ENCODE measurements at regions of chr22 and their contacts with region 1.

Region 1: DNA sequence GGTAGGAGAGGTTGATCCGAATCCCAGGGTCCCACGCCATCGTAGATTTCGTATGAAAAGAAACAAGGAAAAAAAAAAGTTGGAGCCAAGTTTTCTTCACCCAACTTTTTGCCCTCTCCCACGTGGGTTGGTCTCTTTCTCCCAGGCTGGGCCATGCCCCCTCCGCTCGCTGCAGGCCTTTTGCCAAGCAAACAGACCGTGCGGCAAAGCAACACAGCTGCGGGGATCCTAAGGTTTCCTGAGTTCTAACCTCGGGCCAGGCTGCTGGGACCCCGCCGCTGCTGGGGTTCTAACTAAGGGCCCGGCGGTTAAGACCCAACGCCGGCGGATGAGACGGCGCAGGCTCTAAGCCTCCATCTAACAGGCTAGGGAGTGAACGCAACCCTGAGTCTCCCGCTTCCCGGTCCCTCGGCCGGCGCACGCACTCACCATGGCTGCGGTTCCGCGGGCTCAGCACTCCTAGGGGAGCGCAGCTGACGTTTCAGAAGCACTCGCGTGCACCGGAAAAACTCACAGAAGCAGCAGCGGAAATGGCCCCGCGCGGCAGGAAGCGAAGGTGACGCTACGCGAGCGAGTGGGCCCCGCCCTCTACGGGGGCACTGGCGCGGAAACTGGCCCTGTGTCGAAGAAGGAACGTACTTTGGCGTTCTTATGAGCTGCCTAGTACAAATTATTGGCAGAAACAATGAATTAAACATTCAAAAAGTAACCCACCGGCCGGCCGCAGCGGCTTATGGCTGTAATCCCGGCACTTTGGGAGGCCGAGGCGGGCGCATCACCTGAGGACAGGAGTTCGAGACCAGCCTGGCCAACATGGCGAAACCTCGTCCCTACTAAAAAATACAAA is at the start of gene SNU13:
- DNase-seq: peak; percentile 85 to 98
- ATAC-seq: peak; percentile 94 to 97 (median 95)
- H3K4me3 ChIP-seq: peak within 1 kb of the TSS; percentile 92
- H3K4me3 Mint-ChIP-seq: peak within 1 kb of the TSS; percentile 97
- H3K27ac ChIP-seq: peak within 1 kb of the TSS; percentile 100
- H3K27ac Mint-ChIP-seq: peak within 1 kb of the TSS; percentile 97 to 98
- H3K4me1 ChIP-seq: peaks cover 18% of the 10 kb centered on the region
- H3K4me1 Mint-ChIP-seq: peaks cover 19 to 23% of the 10 kb centered on the region in 2 donors
- H3K27me3 ChIP-seq: no peaks in the 10 kb centered on the region
- H3K27me3 Mint-ChIP-seq: no peaks in the 10 kb centered on the region
- CTCF ChIP-seq: no peak
- total RNA-seq, gene SNU13: 100.0 to 106 (median 101) TPM

Region 2: DNA sequence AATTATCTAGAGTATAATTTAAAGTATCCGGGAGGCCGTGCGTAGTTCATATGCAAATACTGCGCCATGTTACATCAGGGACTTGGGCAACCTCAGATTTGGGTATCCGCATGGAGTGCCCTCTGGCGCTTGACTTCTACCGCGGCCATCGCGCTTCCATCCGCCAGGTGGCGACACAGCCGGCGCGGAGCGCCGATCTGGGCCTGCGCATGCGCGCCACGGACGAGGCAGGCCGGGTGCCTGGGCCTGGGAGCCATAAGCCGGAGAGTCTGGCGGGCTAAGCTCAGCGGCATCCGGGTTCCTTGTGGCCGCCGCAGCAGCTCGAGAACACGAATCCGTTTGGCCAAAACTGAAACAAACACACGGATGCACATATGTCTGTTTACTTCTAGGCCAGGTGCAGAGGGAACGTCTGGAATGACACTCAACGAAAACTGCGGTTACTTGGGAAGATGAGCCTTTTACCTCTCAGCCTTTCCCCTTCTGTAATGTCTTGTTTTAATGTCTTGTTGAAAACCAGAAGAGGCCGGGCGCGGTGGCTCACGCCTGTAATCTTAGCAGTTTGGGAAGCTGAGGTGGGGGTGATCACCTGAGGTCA is 21.8 kb before region 1 on chr22:
- intact Hi-C with region 1: loop called (anchors 2 kb)
- DNase-seq: peak; percentile 94 to 98
- ATAC-seq: peak; percentile 94 to 98 (median 95)
- H3K4me3 ChIP-seq: peak overlapping the region; percentile 50
- H3K4me3 Mint-ChIP-seq: peak overlapping the region; percentile 88
- H3K27ac ChIP-seq: peak overlapping the region; percentile 92
- H3K27ac Mint-ChIP-seq: peak overlapping the region; percentile 92 to 93
- H3K4me1 ChIP-seq: peaks cover 14% of the 10 kb centered on the region
- H3K4me1 Mint-ChIP-seq: peaks cover 10 to 11% of the 10 kb centered on the region in 2 donors
- H3K27me3 ChIP-seq: no peaks in the 10 kb centered on the region
- H3K27me3 Mint-ChIP-seq: no peaks in the 10 kb centered on the region
- CTCF ChIP-seq: peak; percentile 99

Region 3: DNA sequence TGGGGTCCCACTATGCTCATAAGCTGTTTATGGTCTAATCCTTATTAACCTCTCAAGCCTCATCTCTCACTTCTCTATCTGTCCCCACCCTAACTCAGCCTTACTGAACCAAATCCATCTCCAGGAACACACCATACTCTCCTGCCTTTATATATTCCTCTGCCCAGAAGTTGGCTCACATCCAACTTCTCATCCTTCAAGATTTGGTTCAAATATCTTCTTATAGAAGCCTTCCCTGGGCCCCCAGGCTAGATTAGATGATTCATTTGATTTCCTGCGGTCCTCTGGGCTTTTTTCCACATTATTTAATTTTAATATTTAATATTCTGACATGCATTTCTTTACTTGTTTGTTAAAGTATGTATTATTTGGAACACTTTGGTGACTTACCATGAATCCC is 33.9 kb after region 1 on chr22:
- intact Hi-C with region 1: no loop called
- DNase-seq: no peak
- ATAC-seq: no peak
- H3K4me3 ChIP-seq: no peak overlapping the region
- H3K4me3 Mint-ChIP-seq: no peak overlapping the region
- H3K27ac ChIP-seq: no peak overlapping the region
- H3K27ac Mint-ChIP-seq: no peak overlapping the region
- H3K4me1 ChIP-seq: no peaks in the 10 kb centered on the region
- H3K4me1 Mint-ChIP-seq: no peaks in the 10 kb centered on the region
- H3K27me3 ChIP-seq: no peaks in the 10 kb centered on the region
- H3K27me3 Mint-ChIP-seq: no peaks in the 10 kb centered on the region
- CTCF ChIP-seq: no peak

Region 4: GRCh38 chr22:41762980-41763779 is 74.6 kb after region 1 on chr22:
- intact Hi-C with region 1: no loop called
- DNase-seq: peak; percentile 20 to 54
- ATAC-seq: peak in 2 of 3 donors; percentile 49 to 50
- H3K4me3 ChIP-seq: no peak overlapping the region
- H3K4me3 Mint-ChIP-seq: no peak overlapping the region
- H3K27ac ChIP-seq: no peak overlapping the region
- H3K27ac Mint-ChIP-seq: no peak overlapping the region
- H3K4me1 ChIP-seq: no peaks in the 10 kb centered on the region
- H3K4me1 Mint-ChIP-seq: no peaks in the 10 kb centered on the region
- H3K27me3 ChIP-seq: no peaks in the 10 kb centered on the region
- H3K27me3 Mint-ChIP-seq: no peaks in the 10 kb centered on the region
- CTCF ChIP-seq: peak; percentile 28

Measured in natural killer cell (primary cell).